ENCODE measurements at regions of chr6 and their contacts with region 1.

Region 1: GRCh38 chr6:63565058-63565726 is 7.1 kb upstream of the LOC128125822 start:
- DNase-seq: no peak
- ATAC-seq: no peak
- H3K4me3 ChIP-seq: no peak overlapping the region
- H3K27ac ChIP-seq: no peak overlapping the region
- H3K4me1 ChIP-seq: no peaks in the 10 kb centered on the region
- H3K27me3 ChIP-seq: no peaks in the 10 kb centered on the region
- CTCF ChIP-seq: no peak
- EP300 ChIP-seq: no peak
- POLR2A ChIP-seq: no peak
- RAD21 ChIP-seq: no peak

Region 2: DNA sequence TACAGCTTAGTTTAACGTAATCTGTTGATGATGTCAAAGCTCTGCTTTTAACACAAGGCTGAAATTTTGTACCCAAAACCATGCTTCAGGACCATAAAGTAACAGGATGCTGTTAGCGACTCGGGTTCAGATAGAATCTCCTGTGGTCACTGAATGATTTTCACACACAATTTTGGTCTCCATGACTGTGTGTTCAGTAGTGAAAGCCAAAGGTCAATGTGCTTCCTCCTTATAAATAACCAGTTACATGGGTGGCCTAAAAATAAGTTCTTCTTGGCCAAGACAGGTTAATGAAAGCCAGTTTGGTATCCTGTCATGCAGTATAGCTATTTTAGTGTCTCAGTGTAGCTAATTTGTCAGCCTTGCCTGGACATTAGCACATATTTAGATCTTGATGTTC is 12.0 kb before region 1 on chr6:
- CTCF ChIA-PET with region 1: interaction called, 4 read pairs
- POLR2A ChIA-PET with region 1: interaction called, 4 read pairs
- RAD21 ChIA-PET with region 1: interaction called, 9 read pairs
- SMC1A ChIA-PET with region 1: interaction called, 14 read pairs
- in situ Hi-C with region 1: no loop called
- intact Hi-C with region 1: no loop called
- DNase-seq: peak; percentile 81
- ATAC-seq: peak; percentile 98
- H3K4me3 ChIP-seq: no peak overlapping the region
- H3K27ac ChIP-seq: no peak overlapping the region
- H3K4me1 ChIP-seq: peaks cover 11% of the 10 kb centered on the region; the same call in 1 of the 2 replicates
- H3K27me3 ChIP-seq: no peaks in the 10 kb centered on the region
- CTCF ChIP-seq: no peak
- EP300 ChIP-seq: peak; percentile 71 to 94; a peak in 3 of 4 replicates
- POLR2A ChIP-seq: no peak
- RAD21 ChIP-seq: no peak